ENCODE measurements at regions of chr4 and their contacts with region 1.

Region 1: GRCh38 chr4:121950212-121950679 is 1.6 kb downstream of the TRPC3 start:
- DNase-seq: peak; percentile 92
- H3K4me3 Mint-ChIP-seq: peak overlapping the region; percentile 86
- H3K27ac Mint-ChIP-seq: no peak overlapping the region
- H3K4me1 Mint-ChIP-seq: peaks cover 5% of the 10 kb centered on the region
- H3K27me3 Mint-ChIP-seq: peaks cover 32% of the 10 kb centered on the region

Region 2: GRCh38 chr4:122003335-122003734 is 53.1 kb after region 1 on chr4:
- CTCF ChIA-PET with region 1: interaction called, 13 read pairs
- intact Hi-C with region 1: loop called (anchors 1 kb)
- DNase-seq: peak; percentile 39
- H3K4me3 Mint-ChIP-seq: no peak overlapping the region
- H3K27ac Mint-ChIP-seq: no peak overlapping the region
- H3K4me1 Mint-ChIP-seq: no peaks in the 10 kb centered on the region
- H3K27me3 Mint-ChIP-seq: peaks cover 4% of the 10 kb centered on the region

Region 3: GRCh38 chr4:122195718-122196117 is 245.5 kb after region 1 on chr4:
- CTCF ChIA-PET with region 1: no interaction called
- intact Hi-C with region 1: no loop called
- DNase-seq: peak; percentile 8
- H3K4me3 Mint-ChIP-seq: no peak overlapping the region
- H3K27ac Mint-ChIP-seq: no peak overlapping the region
- H3K4me1 Mint-ChIP-seq: peaks cover 14% of the 10 kb centered on the region
- H3K27me3 Mint-ChIP-seq: no peaks in the 10 kb centered on the region

Region 4: GRCh38 chr4:122224348-122224747 is 274.1 kb after region 1 on chr4:
- CTCF ChIA-PET with region 1: interaction called, 6 read pairs
- intact Hi-C with region 1: loop called (anchors 1 kb)
- DNase-seq: peak; percentile 35
- H3K4me3 Mint-ChIP-seq: no peak overlapping the region
- H3K27ac Mint-ChIP-seq: no peak overlapping the region
- H3K4me1 Mint-ChIP-seq: no peaks in the 10 kb centered on the region
- H3K27me3 Mint-ChIP-seq: no peaks in the 10 kb centered on the region

Region 5: DNA sequence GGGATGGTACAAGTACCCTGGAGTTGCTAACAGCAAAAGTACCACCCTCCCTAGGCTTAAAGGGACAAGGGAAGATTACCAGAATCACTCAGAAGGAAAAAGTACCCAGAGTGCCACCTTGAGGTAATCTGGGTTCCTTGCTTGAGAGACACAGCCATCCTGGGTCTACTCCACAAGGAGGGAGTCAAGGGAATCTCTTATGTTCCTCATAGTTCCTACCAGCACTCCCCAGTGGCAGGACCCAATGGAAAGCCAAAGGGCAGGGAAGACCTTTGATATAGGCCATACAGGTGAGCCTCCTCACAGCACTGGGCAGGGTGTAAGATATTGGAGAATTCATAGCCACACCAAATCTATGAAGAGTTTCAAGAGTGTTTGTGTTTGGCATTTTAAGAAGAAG is 500.6 kb after region 1 on chr4:
- CTCF ChIA-PET with region 1: no interaction called
- intact Hi-C with region 1: loop called (anchors 1 kb)
- DNase-seq: peak; percentile 59
- H3K4me3 Mint-ChIP-seq: peak overlapping the region; percentile 67
- H3K27ac Mint-ChIP-seq: peak overlapping the region; percentile 96
- H3K4me1 Mint-ChIP-seq: peaks cover 17% of the 10 kb centered on the region
- H3K27me3 Mint-ChIP-seq: no peaks in the 10 kb centered on the region

Region 6: DNA sequence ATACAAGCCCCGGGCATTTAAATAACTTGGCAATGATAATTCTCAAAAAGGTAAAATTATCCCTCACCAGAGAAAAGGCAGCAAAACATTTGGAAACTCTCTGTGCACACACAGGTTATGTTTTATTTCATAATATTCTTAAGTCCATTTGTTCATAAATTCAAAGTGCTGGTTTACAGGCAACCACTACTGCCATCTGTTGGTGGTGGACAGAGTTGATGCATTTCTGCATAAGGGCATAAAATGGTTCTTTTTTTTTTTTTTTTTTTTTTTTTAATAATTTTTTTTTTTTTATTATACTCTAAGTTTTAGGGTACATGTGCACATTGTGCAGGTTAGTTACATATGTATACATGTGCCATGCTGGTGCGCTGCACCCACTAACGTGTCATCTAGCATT is 702.1 kb after region 1 on chr4:
- CTCF ChIA-PET with region 1: no interaction called
- intact Hi-C with region 1: loop called (anchors 5 kb)
- DNase-seq: peak; percentile 88
- H3K4me3 Mint-ChIP-seq: no peak overlapping the region
- H3K27ac Mint-ChIP-seq: peak overlapping the region; percentile 31
- H3K4me1 Mint-ChIP-seq: peaks cover 13% of the 10 kb centered on the region
- H3K27me3 Mint-ChIP-seq: no peaks in the 10 kb centered on the region

Region 7: GRCh38 chr4:122716825-122717448 is 766.7 kb after region 1 on chr4:
- CTCF ChIA-PET with region 1: no interaction called
- intact Hi-C with region 1: loop called (anchors 2 kb)
- DNase-seq: peak; percentile 94
- H3K4me3 Mint-ChIP-seq: no peak overlapping the region
- H3K27ac Mint-ChIP-seq: peak overlapping the region; percentile 65
- H3K4me1 Mint-ChIP-seq: peaks cover 41% of the 10 kb centered on the region
- H3K27me3 Mint-ChIP-seq: no peaks in the 10 kb centered on the region